H1 (cell line): ENCODE measurements at regions of chr6 and their contacts with region 1.

Region 1: GRCh38 chr6:155174576-155175211 is 89.1 kb upstream of the CLDN20 start:
- DNase-seq: peak; percentile 54 to 64
- H3K4me3 ChIP-seq: no peak overlapping the region
- H3K27ac ChIP-seq: no peak overlapping the region
- H3K4me1 ChIP-seq: peaks cover 2 to 11% (median 7%) of the 10 kb centered on the region in 4 experiments; a peak in 6 of 7 replicates
- H3K27me3 ChIP-seq: no peaks in the 10 kb centered on the region
- CTCF ChIP-seq: peak; percentile 28 to 80 (median 79)
- EP300 ChIP-seq: no peak
- POLR2A ChIP-seq: no peak
- RAD21 ChIP-seq: peak; percentile 87 to 91

Region 2: GRCh38 chr6:154868143-154868594 is 306.5 kb before region 1 on chr6:
- CTCF ChIA-PET with region 1: interaction called, 24 read pairs
- POLR2A ChIA-PET with region 1: no interaction called
- DNase-seq: no peak
- H3K4me3 ChIP-seq: no peak overlapping the region
- H3K27ac ChIP-seq: no peak overlapping the region
- H3K4me1 ChIP-seq: peaks cover 0 to 7% (median 5%) of the 10 kb centered on the region in 4 experiments; a peak in 3 of 7 replicates
- H3K27me3 ChIP-seq: no peaks in the 10 kb centered on the region
- CTCF ChIP-seq: peak in 2 of 3 experiments; percentile 56 to 69; a peak in 2 of 4 replicates
- EP300 ChIP-seq: no peak
- POLR2A ChIP-seq: no peak
- RAD21 ChIP-seq: peak; percentile 83 to 89

Region 3: GRCh38 chr6:155062866-155063341 is 111.8 kb before region 1 on chr6:
- CTCF ChIA-PET with region 1: no interaction called
- POLR2A ChIA-PET with region 1: no interaction called
- DNase-seq: no peak
- H3K4me3 ChIP-seq: no peak overlapping the region
- H3K27ac ChIP-seq: no peak overlapping the region
- H3K4me1 ChIP-seq: peaks cover 0 to 5% (median 0%) of the 10 kb centered on the region in 4 experiments; a peak in 2 of 7 replicates
- H3K27me3 ChIP-seq: no peaks in the 10 kb centered on the region
- CTCF ChIP-seq: no peak
- EP300 ChIP-seq: no peak
- POLR2A ChIP-seq: no peak
- RAD21 ChIP-seq: no peak

Region 4: GRCh38 chr6:155188707-155189496 is 14.2 kb after region 1 on chr6:
- CTCF ChIA-PET with region 1: interaction called, 19 read pairs
- POLR2A ChIA-PET with region 1: no interaction called
- DNase-seq: no peak
- H3K4me3 ChIP-seq: no peak overlapping the region
- H3K27ac ChIP-seq: no peak overlapping the region
- H3K4me1 ChIP-seq: peaks cover 6 to 14% (median 9%) of the 10 kb centered on the region in 4 experiments
- H3K27me3 ChIP-seq: no peaks in the 10 kb centered on the region
- CTCF ChIP-seq: no peak
- EP300 ChIP-seq: no peak
- POLR2A ChIP-seq: no peak
- RAD21 ChIP-seq: no peak

Region 5: DNA sequence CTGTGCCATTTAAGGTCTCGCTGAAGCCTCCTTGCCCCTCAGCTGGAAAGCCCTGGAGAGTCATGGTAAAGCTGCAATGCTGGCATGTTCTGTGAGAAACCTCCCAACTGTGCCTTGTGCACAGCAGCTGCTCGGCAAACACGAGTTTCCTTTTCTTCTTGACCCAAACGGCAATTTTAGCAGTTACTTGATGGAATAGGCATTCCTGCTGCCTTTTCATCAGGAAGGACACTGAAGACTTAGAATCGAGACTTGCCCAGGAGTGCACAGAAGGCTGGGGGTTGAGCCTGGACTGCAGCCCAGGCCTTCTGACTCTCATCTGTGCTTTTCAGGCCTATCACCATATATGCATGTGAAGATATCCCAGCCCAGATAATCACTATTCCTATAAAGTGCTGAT is 60.4 kb after region 1 on chr6:
- CTCF ChIA-PET with region 1: interaction called, 17 read pairs
- POLR2A ChIA-PET with region 1: no interaction called
- DNase-seq: no peak
- H3K4me3 ChIP-seq: no peak overlapping the region
- H3K27ac ChIP-seq: no peak overlapping the region
- H3K4me1 ChIP-seq: peaks cover 0 to 4% (median 0%) of the 10 kb centered on the region in 4 experiments; a peak in 2 of 7 replicates
- H3K27me3 ChIP-seq: no peaks in the 10 kb centered on the region
- CTCF ChIP-seq: no peak
- EP300 ChIP-seq: no peak
- POLR2A ChIP-seq: no peak
- RAD21 ChIP-seq: no peak

Region 6: DNA sequence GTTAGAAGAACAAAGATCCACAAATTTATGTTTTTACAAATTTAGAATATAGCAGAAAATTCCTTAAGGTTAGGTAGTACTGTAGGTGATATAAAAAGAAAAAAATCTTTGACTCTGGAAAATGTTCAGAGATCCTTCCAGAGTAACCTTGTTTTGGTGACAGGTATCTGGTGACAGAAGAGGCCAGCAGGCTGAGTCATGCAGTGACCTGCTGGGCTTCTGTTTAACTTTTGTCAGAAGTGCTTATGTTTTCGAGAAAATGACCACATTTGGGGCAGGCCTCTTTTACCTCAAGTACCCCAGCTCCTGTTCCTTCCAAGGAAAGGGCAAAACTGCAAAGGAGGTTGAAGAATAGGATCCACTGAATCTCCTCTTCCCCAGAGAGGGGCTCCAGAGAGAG is 78.6 kb after region 1 on chr6:
- CTCF ChIA-PET with region 1: interaction called, 50 read pairs
- POLR2A ChIA-PET with region 1: interaction called, 8 read pairs
- DNase-seq: peak in 1 of 2 experiments; percentile 33
- H3K4me3 ChIP-seq: no peak overlapping the region
- H3K27ac ChIP-seq: no peak overlapping the region
- H3K4me1 ChIP-seq: peaks cover 0 to 3% (median 3%) of the 10 kb centered on the region in 4 experiments; a peak in 2 of 7 replicates
- H3K27me3 ChIP-seq: no peaks in the 10 kb centered on the region
- CTCF ChIP-seq: no peak
- EP300 ChIP-seq: no peak
- POLR2A ChIP-seq: no peak
- RAD21 ChIP-seq: no peak